Activated CD8-positive, alpha-beta T cell treated with anti-CD3 and anti-CD28 coated beads, Interleukin-2, amount 10 ng/mL, durations not matched to agents 7 days and 5 days (primary cell): ENCODE measurements at regions of chr3 and their contacts with region 1.

Region 1: DNA sequence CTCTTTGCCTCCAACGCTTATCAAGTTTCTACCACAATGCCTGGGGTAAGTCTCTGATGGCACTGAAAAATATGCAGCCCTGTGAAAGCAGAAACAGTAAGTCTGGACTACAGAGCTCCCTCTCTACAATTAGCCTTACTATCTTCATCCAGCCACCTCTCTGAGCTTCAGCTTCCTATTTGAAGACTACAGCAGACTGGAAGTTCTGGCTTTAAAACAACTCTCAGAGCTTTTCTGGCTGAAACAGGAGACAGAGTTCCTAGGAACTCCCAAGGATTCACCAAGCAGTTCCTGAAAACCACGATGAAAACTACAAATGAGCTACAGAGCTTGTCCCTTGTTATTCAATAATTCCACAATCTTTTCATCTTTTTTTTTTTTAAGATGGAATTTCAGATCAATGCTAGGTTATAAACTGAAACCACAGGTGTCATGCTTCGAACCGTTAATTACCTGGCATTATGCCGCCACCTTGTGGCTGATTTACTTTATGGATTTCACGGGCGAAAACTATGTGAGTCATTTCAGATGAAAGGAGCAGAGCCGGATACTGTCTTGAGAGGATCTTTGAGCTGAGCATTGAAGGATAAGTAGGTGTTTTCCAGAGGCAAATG is 3.9 kb downstream of the CRYGS start:
- DNase-seq: peak; percentile 88
- ATAC-seq: peak; percentile 91
- H3K4me3 Mint-ChIP-seq: no peak overlapping the region
- H3K27ac Mint-ChIP-seq: no peak overlapping the region
- H3K4me1 Mint-ChIP-seq: peaks cover 11% of the 10 kb centered on the region
- H3K27me3 Mint-ChIP-seq: no peaks in the 10 kb centered on the region

Region 2: DNA sequence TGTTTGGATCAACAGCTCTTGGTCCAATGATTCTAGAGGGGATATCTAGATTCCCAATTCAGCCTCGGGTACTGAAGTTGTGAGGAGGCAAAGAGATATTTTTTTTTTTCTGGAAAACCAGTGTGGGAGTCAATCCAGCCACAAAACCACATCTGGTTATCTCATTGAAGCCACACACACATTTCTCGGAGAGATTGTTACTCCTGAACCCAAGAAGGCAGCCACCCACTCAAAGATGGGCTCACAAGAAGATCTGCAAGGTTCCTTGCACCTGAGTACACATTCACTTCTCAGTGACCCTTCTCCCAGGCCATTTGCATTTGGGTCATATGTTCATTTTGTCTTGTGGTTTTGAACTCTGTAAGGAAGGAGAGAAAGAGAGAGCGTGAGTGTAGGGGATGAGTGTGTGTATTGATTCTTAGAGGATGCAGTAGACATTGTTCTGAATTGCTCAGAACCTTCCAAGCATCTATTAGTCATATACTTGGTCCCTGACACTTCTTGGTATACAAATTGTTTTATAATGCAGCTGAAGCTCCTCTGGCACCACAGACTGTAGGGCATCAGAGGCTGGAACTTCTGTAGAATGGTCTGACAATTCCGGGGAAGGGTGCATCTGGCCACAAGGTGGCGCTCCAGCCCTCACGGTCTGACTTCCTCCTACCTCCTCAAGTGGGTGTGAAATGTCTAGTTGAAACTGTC is 563.2 kb before region 1 on chr3:
- CTCF ChIA-PET with region 1: interaction called, 47 read pairs
- POLR2A ChIA-PET with region 1: no interaction called
- DNase-seq: peak; percentile 88
- ATAC-seq: peak; percentile 96
- H3K4me3 Mint-ChIP-seq: no peak overlapping the region
- H3K27ac Mint-ChIP-seq: no peak overlapping the region
- H3K4me1 Mint-ChIP-seq: peaks cover 12% of the 10 kb centered on the region
- H3K27me3 Mint-ChIP-seq: peaks cover 25% of the 10 kb centered on the region

Region 3: GRCh38 chr3:186241910-186242821 is 298.2 kb before region 1 on chr3:
- CTCF ChIA-PET with region 1: interaction called, 44 read pairs
- POLR2A ChIA-PET with region 1: no interaction called
- DNase-seq: peak; percentile 80
- ATAC-seq: peak; percentile 97
- H3K4me3 Mint-ChIP-seq: no peak overlapping the region
- H3K27ac Mint-ChIP-seq: no peak overlapping the region
- H3K4me1 Mint-ChIP-seq: peaks cover 18% of the 10 kb centered on the region
- H3K27me3 Mint-ChIP-seq: peaks cover 11% of the 10 kb centered on the region

Region 4: DNA sequence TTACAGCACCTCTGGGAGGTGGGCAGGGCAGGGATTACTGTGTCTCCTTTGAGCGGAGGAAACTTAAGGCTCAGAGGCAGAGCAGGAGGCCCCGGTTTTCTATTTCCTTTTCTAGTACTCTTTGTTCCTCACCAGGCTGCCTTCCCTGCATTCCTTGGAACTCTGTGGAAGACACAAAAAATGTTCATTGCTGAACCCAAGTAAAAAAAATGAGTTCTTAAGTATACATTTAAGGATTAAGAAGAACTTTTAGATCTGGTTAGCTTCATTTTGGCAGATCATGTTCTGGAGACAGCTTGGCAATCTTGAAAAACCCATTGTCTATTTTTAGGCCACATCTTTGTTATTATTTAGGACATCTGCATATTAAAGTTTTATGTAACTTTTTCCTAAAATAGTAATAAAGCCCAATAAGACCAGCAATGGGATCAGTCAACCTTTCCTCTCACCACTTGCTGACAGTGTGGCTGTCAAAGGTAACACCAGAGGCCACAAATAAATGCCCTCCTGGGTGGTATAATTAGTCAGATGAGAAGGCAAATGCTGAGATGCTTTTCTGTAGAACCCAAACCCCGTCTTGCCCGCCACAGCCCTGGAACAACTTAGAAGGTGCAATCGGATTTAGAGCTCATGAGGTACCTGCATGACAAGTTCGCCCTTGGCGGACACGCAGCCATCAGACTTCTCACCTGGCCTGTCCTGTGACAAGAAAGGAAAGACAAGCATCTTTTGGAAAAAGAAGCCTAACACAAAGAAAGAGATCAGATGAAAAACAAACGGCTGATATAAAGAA is 275.5 kb before region 1 on chr3:
- CTCF ChIA-PET with region 1: interaction called, 179 read pairs
- POLR2A ChIA-PET with region 1: no interaction called
- DNase-seq: no peak
- ATAC-seq: no peak
- H3K4me3 Mint-ChIP-seq: no peak overlapping the region
- H3K27ac Mint-ChIP-seq: no peak overlapping the region
- H3K4me1 Mint-ChIP-seq: peaks cover under 1% of the 10 kb centered on the region
- H3K27me3 Mint-ChIP-seq: peaks cover 3% of the 10 kb centered on the region

Region 5: DNA sequence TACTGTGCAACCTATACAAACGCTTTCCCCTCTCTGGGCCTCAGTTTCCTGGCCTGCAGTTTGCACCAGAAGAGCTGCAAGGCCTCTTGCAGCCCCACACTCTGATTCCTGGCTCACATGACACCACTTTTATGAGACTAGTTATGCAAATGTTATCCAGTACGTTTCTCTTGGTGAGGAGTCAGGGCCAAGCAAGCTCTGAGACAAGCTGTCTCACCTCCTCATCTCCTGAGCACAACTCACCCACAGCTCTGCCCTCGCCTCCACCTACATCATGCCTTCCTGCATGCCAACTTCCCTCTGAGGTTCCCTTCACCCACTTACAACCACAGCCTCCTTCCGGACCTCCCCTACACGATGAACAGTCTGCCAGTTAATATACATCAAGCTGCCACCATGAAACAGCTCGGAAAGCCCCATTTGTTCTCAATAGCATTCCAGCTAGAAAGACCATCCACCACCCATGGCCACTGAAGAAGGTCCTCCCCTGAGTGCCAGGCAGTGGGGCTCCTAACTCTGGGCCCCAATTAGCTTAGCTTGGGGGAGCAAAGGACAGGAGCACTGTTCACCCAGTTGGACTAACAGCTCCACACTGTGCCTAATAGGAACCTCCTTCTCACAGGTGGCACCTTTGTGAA is 21.2 kb before region 1 on chr3:
- CTCF ChIA-PET with region 1: interaction called, 44 read pairs
- POLR2A ChIA-PET with region 1: interaction called, 5 read pairs
- DNase-seq: peak; percentile 73
- ATAC-seq: peak; percentile 80
- H3K4me3 Mint-ChIP-seq: peak overlapping the region; percentile 20
- H3K27ac Mint-ChIP-seq: peak overlapping the region; percentile 76
- H3K4me1 Mint-ChIP-seq: peaks cover 55% of the 10 kb centered on the region
- H3K27me3 Mint-ChIP-seq: peaks cover 5% of the 10 kb centered on the region

Region 6: DNA sequence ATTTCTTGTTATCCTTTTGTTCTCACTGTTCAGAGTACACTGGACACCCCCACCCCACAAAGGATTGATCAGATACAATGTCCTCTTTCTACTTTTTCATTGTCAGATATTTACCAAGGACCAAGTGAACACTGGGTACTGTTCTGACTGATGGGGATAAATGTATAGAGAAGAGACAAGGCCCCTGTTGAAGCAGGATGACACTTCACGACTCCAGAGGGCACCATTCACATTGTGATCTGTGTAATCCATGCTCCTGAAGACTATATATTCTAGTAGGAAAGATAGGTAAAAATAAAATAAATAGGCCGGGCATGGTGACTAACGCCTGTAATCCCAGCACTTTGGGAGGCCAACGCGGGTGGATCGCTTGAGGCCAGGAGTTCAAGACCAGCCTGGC is 11.1 kb after region 1 on chr3:
- CTCF ChIA-PET with region 1: interaction called, 24 read pairs
- POLR2A ChIA-PET with region 1: no interaction called
- DNase-seq: no peak
- ATAC-seq: no peak
- H3K4me3 Mint-ChIP-seq: no peak overlapping the region
- H3K27ac Mint-ChIP-seq: no peak overlapping the region
- H3K4me1 Mint-ChIP-seq: no peaks in the 10 kb centered on the region
- H3K27me3 Mint-ChIP-seq: no peaks in the 10 kb centered on the region

Region 7: GRCh38 chr3:186760141-186760813 is 219.9 kb after region 1 on chr3:
- CTCF ChIA-PET with region 1: no interaction called
- POLR2A ChIA-PET with region 1: no interaction called
- DNase-seq: no peak
- ATAC-seq: no peak
- H3K4me3 Mint-ChIP-seq: no peak overlapping the region
- H3K27ac Mint-ChIP-seq: no peak overlapping the region
- H3K4me1 Mint-ChIP-seq: peaks cover 4% of the 10 kb centered on the region
- H3K27me3 Mint-ChIP-seq: no peaks in the 10 kb centered on the region